Heart left ventricle (tissue), 16 donors: ENCODE measurements at regions of chr1 and their contacts with region 1.

Region 1: GRCh38 chr1:171715813-171716251 is 26.0 kb downstream of the VAMP4 start:
- DNase-seq: no peak
- ATAC-seq: peak in 2 of 4 donors; percentile 18 to 26
- H3K4me3 ChIP-seq: no peak overlapping the region
- H3K27ac ChIP-seq: peak overlapping the region in 5 of 12 donors; percentile 8 to 45 (median 18)
- H3K4me1 ChIP-seq: peaks cover 0 to 22% (median 3%) of the 10 kb centered on the region in 12 donors
- H3K27me3 ChIP-seq: no peaks in the 10 kb centered on the region
- CTCF ChIP-seq: peak; percentile 29 to 68 (median 54)
- POLR2A ChIP-seq: no peak

Region 2: DNA sequence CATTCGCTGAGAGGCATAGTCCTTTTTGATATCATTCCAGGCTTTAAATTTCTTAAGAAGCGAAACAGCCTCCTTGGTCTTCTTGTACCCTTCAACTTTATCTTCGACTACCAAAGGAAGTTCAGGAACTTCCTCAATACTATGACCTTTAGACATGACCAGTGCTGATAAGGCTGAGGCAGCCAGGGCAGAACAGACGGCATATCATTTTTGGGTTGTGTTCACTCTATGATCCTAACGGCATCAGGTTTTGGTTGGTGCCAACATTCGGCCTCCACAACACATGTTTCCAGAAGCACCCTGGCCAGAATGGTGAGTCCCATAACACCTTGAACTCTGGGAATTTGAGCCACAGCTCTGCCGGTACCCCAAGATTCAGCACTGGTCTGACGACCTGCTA is 32.0 kb before region 1 on chr1:
- intact Hi-C with region 1: loop called in 1 of 10 experiments (anchors 5 kb)
- DNase-seq: no peak
- ATAC-seq: no peak
- H3K4me3 ChIP-seq: no peak overlapping the region
- H3K27ac ChIP-seq: no peak overlapping the region
- H3K4me1 ChIP-seq: no peaks in the 10 kb centered on the region
- H3K27me3 ChIP-seq: no peaks in the 10 kb centered on the region
- CTCF ChIP-seq: no peak
- POLR2A ChIP-seq: no peak